OCI-LY7 (cell line): ENCODE measurements at regions of chr1 and their contacts with region 1.

Region 1: GRCh38 chr1:225428068-225428880 is 436 bp upstream of the LBR start:
- DNase-seq: peak; percentile 95
- H3K4me3 ChIP-seq: peak overlapping the region; percentile 85
- H3K27ac ChIP-seq: peak overlapping the region; percentile 92
- H3K4me1 ChIP-seq: peaks cover 33% of the 10 kb centered on the region
- CTCF ChIP-seq: no peak

Region 2: GRCh38 chr1:225400968-225401367 is 27.3 kb before region 1 on chr1:
- CTCF ChIA-PET with region 1: no interaction called
- POLR2A ChIA-PET with region 1: interaction called, 18 read pairs
- intact Hi-C with region 1: no loop called
- DNase-seq: no peak
- H3K4me3 ChIP-seq: no peak overlapping the region
- H3K27ac ChIP-seq: no peak overlapping the region
- H3K4me1 ChIP-seq: peaks cover 3% of the 10 kb centered on the region
- CTCF ChIP-seq: no peak

Region 3: GRCh38 chr1:225441314-225442122 is 13.2 kb after region 1 on chr1:
- CTCF ChIA-PET with region 1: interaction called, 6 read pairs
- POLR2A ChIA-PET with region 1: interaction called, 242 read pairs
- intact Hi-C with region 1: loop called (anchors 1 kb)
- DNase-seq: peak; percentile 68
- H3K4me3 ChIP-seq: peak overlapping the region; percentile 26
- H3K27ac ChIP-seq: peak overlapping the region; percentile 84
- H3K4me1 ChIP-seq: peaks cover 94% of the 10 kb centered on the region
- CTCF ChIP-seq: peak; percentile 96

Region 4: GRCh38 chr1:225467193-225468020 is 39.1 kb after region 1 on chr1:
- CTCF ChIA-PET with region 1: interaction called, 3 read pairs
- POLR2A ChIA-PET with region 1: interaction called, 39 read pairs
- intact Hi-C with region 1: loop called (anchors 1 kb)
- DNase-seq: peak; percentile 96
- H3K4me3 ChIP-seq: peak overlapping the region; percentile 74
- H3K27ac ChIP-seq: peak overlapping the region; percentile 95
- H3K4me1 ChIP-seq: peaks cover 47% of the 10 kb centered on the region
- CTCF ChIP-seq: peak; percentile 17; the same call in 1 of the 2 replicates

Region 5: DNA sequence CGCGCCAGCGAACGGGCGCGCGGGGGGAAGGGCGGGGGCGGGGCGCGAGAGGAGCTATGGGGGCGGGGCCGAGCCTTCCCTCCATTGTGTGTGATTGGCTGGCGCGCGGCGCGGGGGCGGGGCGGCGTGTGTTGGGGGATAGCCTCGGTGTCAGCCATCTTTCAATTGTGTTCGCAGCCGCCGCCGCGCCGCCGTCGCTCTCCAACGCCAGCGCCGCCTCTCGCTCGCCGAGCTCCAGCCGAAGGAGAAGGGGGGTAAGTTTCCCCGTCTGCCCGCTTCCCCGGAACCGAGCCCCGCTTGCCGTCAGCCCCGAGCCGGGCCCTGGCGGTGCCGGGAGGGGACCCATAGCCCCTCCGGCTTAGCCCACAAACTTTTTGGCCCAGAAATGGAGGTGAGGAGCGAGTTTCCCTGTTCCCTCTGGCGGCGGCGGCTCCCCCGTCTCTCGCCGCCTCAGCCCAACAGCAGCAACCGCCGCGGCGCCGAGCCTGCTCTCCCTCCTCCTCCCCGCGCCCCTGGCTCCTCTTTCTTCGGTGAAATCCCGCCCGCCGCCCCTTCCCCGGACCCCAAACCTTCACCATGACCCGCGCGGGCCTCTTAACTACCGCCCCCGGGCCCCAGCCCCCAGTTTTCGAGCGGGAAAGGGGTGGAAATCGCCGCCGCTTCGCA is 634.4 kb after region 1 on chr1 and contains the start of gene H3-3A:
- CTCF ChIA-PET with region 1: no interaction called
- POLR2A ChIA-PET with region 1: no interaction called
- intact Hi-C with region 1: loop called (anchors 2 kb)
- DNase-seq: peak; percentile 96
- H3K4me3 ChIP-seq: peak within 1 kb of the TSS; percentile 89
- H3K27ac ChIP-seq: peak within 1 kb of the TSS; percentile 92
- H3K4me1 ChIP-seq: peaks cover 33% of the 10 kb centered on the region
- CTCF ChIP-seq: 0 out of 2 replicates have a peak, but pooled peaks have one; percentile 22
- total RNA-seq, gene H3-3A: 365 and 416 TPM in 2 replicates